ENCODE measurements at regions of chr1 and their contacts with region 1.

Region 1: GRCh38 chr1:172398970-172399755 is 21.3 kb upstream of the C1orf105 start:
- DNase-seq: peak; percentile 89
- H3K4me3 ChIP-seq: no peak overlapping the region
- H3K27ac ChIP-seq: peak overlapping the region; percentile 69
- H3K4me1 ChIP-seq: peaks cover 23% of the 10 kb centered on the region
- H3K27me3 ChIP-seq: no peaks in the 10 kb centered on the region
- CTCF ChIP-seq: peak; percentile 20 to 40
- POLR2A ChIP-seq: no peak

Region 2: GRCh38 chr1:172089768-172090510 is 309.2 kb before region 1 on chr1:
- CTCF ChIA-PET with region 1: interaction called, 28 read pairs
- POLR2A ChIA-PET with region 1: no interaction called
- dilution Hi-C with region 1: no loop called
- intact Hi-C with region 1: loop called (anchors 1 kb)
- DNase-seq: peak; percentile 67
- H3K4me3 ChIP-seq: no peak overlapping the region
- H3K27ac ChIP-seq: no peak overlapping the region
- H3K4me1 ChIP-seq: no peaks in the 10 kb centered on the region
- H3K27me3 ChIP-seq: no peaks in the 10 kb centered on the region
- CTCF ChIP-seq: peak; percentile 59 to 67
- POLR2A ChIP-seq: no peak

Region 3: GRCh38 chr1:172144445-172145061 is 254.6 kb before region 1 on chr1:
- CTCF ChIA-PET with region 1: interaction called, 11 read pairs
- POLR2A ChIA-PET with region 1: no interaction called
- dilution Hi-C with region 1: no loop called
- intact Hi-C with region 1: loop called (anchors 1 kb)
- DNase-seq: peak; percentile 76
- H3K4me3 ChIP-seq: peak overlapping the region; percentile 22 to 96 (median 38)
- H3K27ac ChIP-seq: peak overlapping the region; percentile 87
- H3K4me1 ChIP-seq: peaks cover 57% of the 10 kb centered on the region
- H3K27me3 ChIP-seq: no peaks in the 10 kb centered on the region
- CTCF ChIP-seq: no peak
- POLR2A ChIP-seq: no peak

Region 4: DNA sequence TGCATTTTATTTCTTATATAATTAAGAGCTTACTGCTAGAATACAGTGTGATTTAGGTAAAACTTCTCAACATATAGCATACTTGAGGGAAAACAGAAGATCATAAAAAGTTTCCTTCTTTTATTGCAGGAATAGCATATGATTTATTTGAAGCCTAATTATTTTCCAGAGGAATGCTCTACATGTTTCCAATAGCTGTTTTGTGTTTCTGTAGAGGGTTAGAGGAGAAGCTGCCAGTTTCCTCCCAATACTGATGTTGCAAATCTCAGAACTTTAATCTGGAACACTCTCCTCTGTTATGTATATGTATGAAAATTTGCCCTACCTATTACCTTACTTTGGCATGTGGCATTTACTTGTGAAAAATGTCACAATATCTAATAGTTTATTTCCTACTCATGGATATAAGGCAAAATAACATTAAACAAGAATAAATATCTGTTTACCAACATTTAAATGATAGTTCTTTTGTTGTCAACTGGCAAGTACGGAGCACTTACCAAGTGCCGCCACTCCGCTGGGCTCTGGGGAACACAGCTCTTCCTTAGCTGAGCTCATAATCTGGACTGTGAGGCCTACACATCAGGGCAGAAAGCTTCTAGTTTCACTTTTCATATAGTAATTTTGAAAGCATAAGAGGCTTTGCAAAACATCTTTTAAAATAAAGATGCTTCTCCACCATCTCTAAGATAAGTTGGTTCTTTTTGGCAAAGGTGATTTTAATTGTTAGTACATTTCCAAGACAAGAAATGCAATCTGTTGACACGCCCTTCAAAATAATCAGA is 218.5 kb before region 1 on chr1:
- CTCF ChIA-PET with region 1: interaction called, 10 read pairs
- POLR2A ChIA-PET with region 1: no interaction called
- dilution Hi-C with region 1: no loop called
- intact Hi-C with region 1: loop called (anchors 2 kb)
- DNase-seq: peak; percentile 75
- H3K4me3 ChIP-seq: peak overlapping the region in 1 of 3 experiments; percentile 58
- H3K27ac ChIP-seq: peak overlapping the region; percentile 46
- H3K4me1 ChIP-seq: peaks cover 11% of the 10 kb centered on the region
- H3K27me3 ChIP-seq: no peaks in the 10 kb centered on the region
- CTCF ChIP-seq: no peak
- POLR2A ChIP-seq: no peak

Region 5: DNA sequence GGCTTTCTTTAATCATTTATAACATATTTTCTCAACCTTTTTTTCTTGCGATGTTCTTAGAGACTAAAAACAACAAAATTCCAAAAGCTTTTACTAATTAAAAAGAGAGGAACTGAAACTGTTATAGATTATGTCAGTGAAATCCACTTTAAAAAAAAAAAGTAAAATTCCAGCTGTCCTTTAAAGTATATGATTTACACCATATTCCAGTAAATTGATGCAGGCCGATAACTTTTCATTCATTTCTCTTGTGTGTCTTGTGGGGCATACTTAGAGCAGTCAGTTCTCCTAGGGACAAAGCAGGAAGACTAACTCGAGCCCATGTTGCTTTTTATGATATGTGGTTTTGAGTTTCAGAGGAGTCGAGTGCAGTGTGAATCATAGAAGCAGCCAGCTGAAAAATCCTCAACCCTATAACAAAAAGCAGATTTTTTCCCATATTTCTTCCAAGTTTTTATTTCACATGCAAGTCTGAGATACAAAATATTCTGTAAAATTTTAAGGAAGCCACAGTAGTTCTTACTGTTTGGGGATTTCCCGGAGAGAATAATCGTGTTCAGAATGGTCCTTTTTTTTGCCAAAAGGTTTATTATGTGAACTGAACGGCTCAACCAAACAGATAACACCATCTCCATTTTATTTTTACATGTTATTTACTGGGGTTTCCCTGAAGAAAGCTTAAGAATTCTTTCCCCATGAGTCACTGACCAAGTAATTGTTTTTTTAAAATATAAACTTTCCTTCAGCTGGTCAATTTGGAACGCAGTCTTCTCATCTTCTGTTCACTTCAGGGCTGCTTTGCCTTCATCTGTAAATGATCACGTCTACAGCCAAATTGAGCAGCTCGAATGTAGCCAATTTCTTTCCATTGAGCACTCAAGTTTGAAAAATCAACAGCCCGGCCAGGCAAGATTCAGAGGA is 55.7 kb before region 1 on chr1:
- CTCF ChIA-PET with region 1: interaction called, 13 read pairs
- POLR2A ChIA-PET with region 1: no interaction called
- dilution Hi-C with region 1: no loop called
- intact Hi-C with region 1: loop called (anchors 1 kb)
- DNase-seq: peak; percentile 86
- H3K4me3 ChIP-seq: peak overlapping the region in 1 of 3 experiments; percentile 32
- H3K27ac ChIP-seq: peak overlapping the region; percentile 99
- H3K4me1 ChIP-seq: peaks cover 26% of the 10 kb centered on the region
- H3K27me3 ChIP-seq: no peaks in the 10 kb centered on the region
- CTCF ChIP-seq: no peak
- POLR2A ChIP-seq: no peak

Measured in endothelial cell of umbilical vein (primary cell).